ENCODE measurements at regions of chr2 and their contacts with region 1.

Region 1: DNA sequence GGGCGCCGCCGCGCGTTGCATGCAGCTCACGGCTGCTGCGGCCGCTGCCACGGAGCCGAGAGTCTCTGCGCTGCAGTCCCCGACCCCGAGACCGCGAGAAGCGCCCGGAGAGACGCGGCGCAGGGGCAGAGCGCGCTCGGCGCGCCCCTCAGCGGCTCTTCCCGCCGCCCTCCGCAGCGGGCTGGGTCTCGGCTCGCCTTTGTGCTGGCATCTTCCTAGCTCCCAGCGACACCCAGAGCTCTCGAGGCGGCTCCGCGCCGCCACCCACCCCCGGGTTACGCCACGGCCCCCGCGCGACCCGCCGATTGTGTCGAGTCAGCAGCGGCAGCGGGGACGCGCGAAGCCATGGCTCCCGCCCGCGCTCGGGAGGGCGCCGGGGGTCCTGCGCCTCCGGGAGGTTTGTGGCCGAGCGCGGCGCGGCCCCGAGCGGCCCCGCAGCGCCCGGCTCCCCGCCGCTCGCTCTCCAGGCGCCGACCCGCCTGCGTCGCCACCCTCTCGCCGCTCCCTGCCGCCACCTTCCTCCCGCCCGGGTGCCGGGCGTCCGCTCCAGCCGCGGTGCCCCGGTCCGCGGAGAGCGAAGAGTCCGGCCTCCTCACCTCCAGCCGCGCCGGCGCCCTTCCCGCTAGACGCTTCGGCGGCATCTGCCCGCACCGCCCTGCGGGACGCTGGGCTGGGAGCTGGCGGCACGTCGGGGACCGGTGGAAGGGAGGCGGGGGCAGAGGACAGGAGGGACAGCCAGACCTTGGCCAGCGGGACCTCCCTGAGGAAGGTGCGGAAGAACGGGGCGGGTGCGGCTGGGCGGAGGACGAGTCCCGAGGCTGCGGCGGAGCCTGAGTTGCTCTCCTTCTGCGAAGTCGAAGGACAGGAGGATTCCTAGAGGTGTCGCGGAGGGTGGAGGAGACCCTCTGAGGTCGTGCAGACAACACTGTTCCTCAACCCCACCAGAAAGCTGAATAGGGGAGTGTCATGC is 46.3 kb upstream of the CCDC150 start:
- DNase-seq: peak; percentile 65 to 96 (median 76)

Region 2: DNA sequence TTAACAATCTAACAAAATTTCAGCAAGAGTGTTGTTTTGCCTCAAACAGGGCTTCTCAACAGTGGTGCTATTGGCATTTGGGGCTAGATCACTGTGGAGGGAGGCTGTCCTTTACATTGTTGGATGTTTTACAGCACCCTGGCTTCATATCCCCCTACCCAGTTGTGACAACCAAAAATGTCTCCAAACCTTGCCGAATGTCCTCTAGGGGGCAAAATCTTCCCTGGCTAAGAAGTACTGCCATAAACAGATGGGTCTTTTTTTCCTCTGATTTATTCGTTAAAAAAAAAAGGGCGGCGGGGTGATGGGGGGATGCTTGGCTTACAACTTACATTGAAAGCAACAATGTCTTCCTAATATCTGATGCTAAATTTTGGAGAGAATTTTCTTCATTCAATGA is 161.2 kb before region 1 on chr2:
- intact Hi-C with region 1: loop called (anchors 5 kb)
- DNase-seq: peak in 1 of 10 donors; percentile 28

Region 3: DNA sequence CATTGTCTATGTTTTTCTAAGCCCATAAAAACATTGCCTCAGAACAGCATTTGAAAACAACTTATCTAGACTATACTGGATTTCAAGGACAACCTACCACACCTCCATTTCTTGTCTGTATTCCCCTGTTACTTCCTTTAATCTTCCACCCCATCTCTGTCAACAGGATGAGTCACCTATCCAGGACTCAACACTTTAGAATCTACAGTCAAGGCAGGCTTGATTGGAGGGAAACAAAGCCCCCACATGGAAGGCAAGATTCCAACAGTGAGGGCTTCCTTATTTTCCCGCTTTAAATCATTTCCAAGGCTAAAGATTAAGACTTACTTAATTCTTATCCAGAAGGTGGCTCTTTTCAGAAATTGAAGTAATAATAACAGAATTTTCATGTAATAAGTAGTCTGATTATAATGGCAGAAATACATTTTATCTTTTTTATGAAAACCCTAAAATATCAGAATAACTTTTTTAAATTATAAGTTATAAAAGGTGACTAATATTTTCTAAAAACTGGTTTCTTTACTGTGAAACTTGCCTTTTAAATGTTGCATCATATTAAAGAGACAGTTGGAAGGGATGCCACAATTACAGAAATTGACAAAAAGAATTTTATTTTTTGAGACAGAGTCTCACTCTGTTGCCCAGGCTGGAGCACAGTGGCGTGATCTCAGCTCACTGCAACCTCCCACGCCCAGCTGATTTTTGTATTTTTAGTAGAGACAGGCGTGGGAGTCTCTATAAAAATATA is 92.3 kb before region 1 on chr2:
- intact Hi-C with region 1: loop called (anchors 10 kb)
- DNase-seq: no peak

Region 4: DNA sequence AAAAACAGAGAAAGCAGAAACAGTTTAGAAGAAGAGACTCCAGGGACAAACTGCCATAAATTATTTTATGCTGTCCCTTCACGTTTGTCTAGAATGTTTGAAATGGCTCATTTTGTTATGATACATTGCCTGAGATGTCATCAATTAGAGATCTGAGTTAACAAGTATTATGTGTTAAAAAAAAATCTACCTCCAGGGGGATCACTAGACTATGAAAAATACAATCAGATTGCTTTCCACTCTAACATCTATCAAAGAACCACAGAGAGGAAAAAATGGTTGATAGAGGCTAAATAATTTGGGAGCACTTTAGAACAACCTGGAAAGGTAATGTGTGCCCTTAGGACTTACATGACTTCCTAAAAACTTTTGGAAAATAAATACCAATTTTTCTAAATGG is 57.5 kb before region 1 on chr2:
- intact Hi-C with region 1: loop called (anchors 2 kb)
- DNase-seq: no peak

Region 5: DNA sequence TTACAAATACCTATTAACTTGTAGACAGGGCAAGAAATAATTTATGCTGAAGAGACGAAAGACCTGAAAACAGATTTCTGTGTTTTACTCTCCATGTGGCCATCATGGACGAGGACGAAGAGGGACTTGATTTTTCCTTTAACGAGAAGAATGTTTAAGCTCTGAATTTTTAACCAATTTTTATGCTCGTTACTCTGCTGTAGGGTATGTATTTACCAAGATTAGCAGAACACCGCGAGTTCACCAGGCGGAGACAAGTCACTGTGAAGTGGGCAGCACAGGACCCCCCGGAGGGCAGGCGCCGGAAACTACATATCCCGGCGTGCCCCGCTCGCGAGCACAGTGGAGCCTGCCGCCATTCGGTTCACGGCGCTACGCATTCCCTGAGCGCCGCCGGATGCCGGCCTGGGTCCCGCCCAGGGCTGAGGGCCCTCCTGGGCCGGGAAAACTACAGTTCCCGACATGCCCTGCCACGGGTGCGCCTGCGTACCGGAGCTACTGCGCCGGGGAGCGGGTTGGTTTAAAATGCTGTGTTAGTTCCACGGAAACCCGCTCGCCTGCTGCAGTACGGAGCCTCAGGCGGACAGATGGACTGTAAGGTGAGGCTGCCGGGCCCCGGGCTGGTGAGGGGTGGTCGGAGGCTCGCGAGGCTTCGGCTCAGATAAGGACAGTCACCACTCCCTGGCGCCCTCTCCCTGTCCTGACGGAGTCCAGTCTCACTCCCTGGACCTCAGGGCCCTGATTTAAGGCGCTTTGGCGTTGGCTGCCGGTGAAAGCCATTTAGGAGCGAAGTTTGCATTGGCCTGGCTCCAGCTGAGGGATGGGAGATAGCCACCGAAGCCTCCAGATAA is 46.2 kb after region 1 on chr2 and contains the start of gene CCDC150:
- intact Hi-C with region 1: loop called (anchors 2 kb)
- DNase-seq: peak; percentile 89 to 99 (median 94)

Region 6: GRCh38 chr2:197857476-197858107 is 1264.4 kb after region 1 on chr2:
- intact Hi-C with region 1: no loop called
- DNase-seq: no peak

Measured in posterior cingulate gyrus (tissue), 11 donors.